ENCODE measurements at regions of chr6 and their contacts with region 1.

Region 1: DNA sequence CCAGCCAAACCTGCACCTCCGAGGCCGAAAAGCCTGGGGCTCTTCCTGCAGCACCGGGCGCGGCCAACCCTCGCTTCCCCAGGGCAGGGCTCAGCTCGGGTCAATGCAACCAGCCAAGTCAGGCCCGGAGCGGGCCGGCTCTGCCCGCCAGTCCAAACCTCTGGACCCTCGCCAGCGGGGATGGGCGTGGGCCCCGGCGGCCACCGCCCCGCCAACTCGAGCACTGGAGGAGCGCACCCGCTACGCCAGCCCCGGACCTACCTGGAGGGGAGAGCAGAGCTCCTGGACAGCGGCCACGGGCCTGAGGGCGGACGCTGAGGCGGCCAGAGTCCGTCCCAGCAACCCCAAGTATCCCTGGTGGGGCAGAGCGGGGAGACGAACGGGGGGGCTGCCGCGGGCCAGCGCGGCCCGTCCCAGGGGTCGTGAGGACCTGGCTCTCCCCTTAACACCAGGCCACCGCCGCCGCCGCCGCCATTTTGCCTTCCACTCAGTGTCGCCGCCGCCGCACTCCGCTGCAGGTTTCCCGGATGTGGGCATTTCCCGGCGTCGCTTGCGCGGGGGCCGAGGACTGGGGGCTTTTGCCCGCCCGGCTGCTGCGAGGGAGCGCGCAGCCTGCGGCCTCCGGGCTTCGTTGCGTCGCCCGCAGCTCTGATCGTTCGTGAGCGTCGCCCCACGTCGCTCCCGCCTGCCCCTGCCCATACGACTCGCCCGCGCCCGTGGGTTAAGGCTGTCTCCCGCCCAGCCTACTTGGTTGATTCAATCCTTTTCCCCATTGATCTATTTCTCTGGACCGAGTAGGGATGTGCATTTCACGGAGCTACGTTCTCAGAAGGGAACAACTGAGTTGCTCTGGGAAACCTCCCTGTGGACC is at the start of gene LATS1:
- DNase-seq: peak; percentile 95
- H3K4me3 Mint-ChIP-seq: peak within 1 kb of the TSS; percentile 92
- H3K27ac Mint-ChIP-seq: peak within 1 kb of the TSS; percentile 96
- H3K4me1 Mint-ChIP-seq: peaks cover 31% of the 10 kb centered on the region
- H3K27me3 Mint-ChIP-seq: no peaks in the 10 kb centered on the region
- total RNA-seq, gene LATS1: 19.1 to 20.1 TPM

Region 2: DNA sequence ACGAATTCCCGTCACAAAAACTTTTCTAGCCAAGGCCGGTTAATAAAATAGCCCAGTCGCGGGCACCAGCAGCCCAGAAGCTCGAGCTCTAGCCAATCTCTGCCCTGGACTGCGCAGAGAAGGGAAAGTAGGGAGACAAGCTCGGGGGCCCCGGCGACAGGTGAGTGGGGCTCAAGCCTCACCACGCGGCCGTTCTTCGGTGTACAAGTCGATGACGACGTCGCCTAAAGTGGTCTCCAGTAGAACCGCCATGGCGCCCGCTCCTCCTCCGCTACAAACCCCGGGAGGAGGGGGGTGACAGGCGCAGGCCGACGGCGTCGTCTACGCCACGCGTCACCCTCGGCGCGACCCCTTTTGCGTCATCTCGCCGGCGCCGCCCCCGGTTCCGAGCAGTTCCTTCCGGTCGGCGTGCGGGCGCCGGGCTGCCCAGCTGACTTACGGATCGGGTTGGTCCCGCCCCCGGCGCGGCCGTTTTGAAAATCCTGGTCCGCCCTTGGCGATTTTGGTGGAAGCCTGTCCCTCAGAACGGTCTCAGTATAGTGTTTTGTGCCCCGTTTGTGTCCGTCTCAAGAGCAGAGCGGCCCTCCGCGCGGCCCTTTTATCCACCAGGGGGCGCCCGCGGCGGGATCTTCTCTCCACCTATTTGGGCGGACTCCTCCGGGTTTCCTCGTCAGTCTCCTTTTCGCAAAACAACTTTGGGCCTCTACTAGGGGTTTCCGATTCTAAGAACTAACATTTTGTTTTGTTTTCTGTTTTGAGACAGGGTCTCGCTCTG is 171.9 kb before region 1 on chr6 and contains the start of gene PPIL4:
- CTCF ChIA-PET with region 1: interaction called, 3 read pairs
- POLR2A ChIA-PET with region 1: interaction called, 9 read pairs
- intact Hi-C with region 1: loop called (anchors 1 kb)
- DNase-seq: peak; percentile 97
- H3K4me3 Mint-ChIP-seq: peak within 1 kb of the TSS; percentile 97
- H3K27ac Mint-ChIP-seq: peak within 1 kb of the TSS; percentile 97
- H3K4me1 Mint-ChIP-seq: peaks cover 38% of the 10 kb centered on the region
- H3K27me3 Mint-ChIP-seq: peaks cover 4% of the 10 kb centered on the region
- total RNA-seq, gene PPIL4: 21.5 to 23.6 TPM

Region 3: DNA sequence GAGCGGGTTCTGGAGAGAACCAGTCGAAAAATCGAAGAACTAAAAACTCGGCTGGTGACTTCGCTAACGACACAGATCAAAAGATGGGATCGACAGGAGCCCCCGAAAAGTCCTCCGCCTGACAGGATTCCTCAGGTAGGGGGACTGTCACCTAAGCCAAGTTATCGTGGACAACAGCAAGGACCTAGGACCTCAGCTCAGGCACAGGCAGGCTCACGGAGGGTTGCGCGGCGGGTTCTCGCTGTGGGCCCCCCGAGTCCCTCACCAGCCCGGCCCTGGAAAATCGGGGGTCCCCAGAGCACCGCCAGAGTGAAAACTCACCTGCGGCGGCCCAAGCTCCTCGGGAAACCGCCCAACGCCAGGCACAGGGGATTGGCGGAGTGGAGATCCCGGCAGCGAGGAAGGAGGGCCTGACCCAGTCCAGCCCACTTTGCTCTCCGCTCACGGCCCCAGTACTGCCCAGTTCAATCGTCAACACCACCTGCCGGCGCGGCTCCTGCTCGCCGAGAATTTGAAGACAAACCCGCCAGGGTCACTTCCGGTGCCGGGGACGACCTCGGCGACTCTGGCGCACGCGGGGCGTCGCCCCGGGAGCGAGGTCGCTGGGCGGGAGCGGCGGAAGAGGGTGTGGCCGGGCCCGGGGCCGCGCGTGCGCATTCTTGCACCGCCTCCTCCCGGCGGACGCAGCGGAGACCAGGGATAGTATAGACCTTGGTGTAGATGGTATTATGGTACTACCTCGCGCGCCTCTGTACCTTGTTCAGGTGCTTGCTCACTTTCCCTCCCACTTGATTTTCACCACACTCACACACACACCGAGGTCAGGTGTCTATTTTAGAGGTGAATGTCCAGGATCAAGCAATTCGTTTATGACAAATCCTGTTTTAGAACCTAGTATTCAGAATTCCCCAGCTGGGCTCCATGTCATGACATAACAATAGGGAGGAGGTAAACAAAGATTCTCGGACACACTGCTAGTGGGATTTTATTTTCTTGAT is 69.4 kb before region 1 on chr6 and contains the start of gene KATNA1:
- CTCF ChIA-PET with region 1: interaction called, 3 read pairs
- POLR2A ChIA-PET with region 1: no interaction called
- intact Hi-C with region 1: loop called (anchors 2 kb)
- DNase-seq: peak; percentile 94
- H3K4me3 Mint-ChIP-seq: peak within 1 kb of the TSS; percentile 79
- H3K27ac Mint-ChIP-seq: peak within 1 kb of the TSS; percentile 81
- H3K4me1 Mint-ChIP-seq: peaks cover 22% of the 10 kb centered on the region
- H3K27me3 Mint-ChIP-seq: no peaks in the 10 kb centered on the region
- total RNA-seq, gene KATNA1: 22.3 to 22.8 TPM

Region 4: GRCh38 chr6:149686230-149686629 is 31.6 kb before region 1 on chr6:
- CTCF ChIA-PET with region 1: interaction called, 3 read pairs
- POLR2A ChIA-PET with region 1: interaction called, 3 read pairs
- intact Hi-C with region 1: loop called (anchors 2 kb)
- DNase-seq: no peak
- H3K4me3 Mint-ChIP-seq: no peak overlapping the region
- H3K27ac Mint-ChIP-seq: peak overlapping the region; percentile 52
- H3K4me1 Mint-ChIP-seq: peaks cover 19% of the 10 kb centered on the region
- H3K27me3 Mint-ChIP-seq: no peaks in the 10 kb centered on the region

Region 5: DNA sequence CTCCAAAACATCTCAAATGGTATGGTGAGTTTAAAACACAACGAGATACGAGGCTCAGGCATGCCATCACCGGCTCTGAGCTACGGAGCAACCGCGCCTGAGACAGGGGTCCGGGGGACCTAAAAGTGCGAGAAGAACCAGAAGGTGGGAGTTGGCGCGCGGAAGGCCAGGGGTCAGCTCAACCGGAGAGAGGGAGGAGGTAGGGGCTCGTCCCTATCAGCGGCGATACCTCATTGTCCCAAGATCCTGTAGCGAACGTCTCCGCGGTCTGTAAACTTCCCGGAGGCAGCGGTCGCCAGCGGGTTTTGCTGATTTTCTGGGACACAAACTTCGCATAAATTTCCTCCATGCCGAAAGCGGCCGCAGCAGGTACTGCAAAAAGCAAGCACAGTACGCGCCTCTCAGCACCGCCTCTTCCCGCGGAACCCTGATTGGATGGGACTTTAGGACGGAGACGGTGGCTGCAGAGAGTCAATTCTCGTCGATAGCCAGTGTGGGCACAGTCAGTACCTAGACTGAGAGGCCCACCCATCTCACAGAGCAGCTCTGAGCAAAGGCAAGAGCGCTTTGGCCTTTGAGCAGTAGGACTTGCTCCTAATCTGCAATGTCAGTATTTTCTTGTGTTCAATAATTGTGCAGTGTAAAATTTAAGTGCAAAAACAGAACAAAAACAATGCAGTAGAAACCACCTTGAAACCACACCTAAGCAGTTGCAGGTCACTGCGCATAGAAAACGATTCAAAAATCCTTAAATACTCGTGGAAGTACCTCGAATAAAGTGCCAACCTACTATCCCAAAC is 28.5 kb after region 1 on chr6 and contains the start of gene NUP43:
- CTCF ChIA-PET with region 1: interaction called, 5 read pairs
- POLR2A ChIA-PET with region 1: interaction called, 15 read pairs
- intact Hi-C with region 1: loop called (anchors 1 kb)
- DNase-seq: peak; percentile 97
- H3K4me3 Mint-ChIP-seq: peak within 1 kb of the TSS; percentile 98
- H3K27ac Mint-ChIP-seq: peak within 1 kb of the TSS; percentile 85
- H3K4me1 Mint-ChIP-seq: peaks cover 28% of the 10 kb centered on the region
- H3K27me3 Mint-ChIP-seq: no peaks in the 10 kb centered on the region
- total RNA-seq, gene NUP43: 64.3 to 69.8 TPM

Region 6: DNA sequence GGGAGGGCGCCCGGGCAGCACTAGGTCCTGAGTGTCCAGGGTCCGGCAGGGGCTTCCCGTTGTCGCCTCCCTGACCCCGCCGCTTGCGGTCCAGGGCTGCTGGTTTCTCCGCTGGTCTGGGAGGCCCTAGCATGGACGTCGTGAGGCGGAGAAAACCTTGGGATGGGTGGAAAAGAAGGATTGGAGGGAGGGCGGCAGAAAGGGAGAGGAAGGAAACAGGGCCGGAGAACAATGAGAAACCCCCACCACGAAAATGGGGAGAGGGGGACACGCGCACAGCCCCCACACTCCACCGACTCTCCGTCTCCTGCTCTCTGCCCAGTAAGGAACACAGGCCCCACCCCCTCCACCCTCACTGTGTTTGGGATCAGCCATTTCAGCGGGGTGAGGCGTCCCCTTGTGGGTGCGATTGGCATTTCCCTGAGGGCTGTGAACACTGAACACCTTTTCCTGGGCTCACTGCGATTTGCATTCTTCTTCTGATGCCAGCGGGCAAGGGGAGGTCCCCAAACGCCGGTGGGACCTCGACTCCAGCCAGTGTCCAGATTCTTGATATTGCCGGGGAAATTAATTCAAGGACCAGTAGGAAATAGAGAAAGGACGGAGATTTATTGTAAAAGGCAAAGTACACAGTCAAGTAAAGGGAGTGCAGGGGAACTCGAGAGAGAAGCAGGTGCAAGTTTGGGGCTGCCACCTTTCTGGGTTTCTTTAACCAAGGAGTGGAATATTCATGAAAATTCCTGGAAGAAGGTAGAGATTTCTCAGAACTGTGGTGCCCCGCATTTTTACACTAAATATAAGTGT is 208.4 kb after region 1 on chr6:
- CTCF ChIA-PET with region 1: no interaction called
- POLR2A ChIA-PET with region 1: no interaction called
- intact Hi-C with region 1: loop called (anchors 5 kb)
- DNase-seq: peak; percentile 90
- H3K4me3 Mint-ChIP-seq: peak overlapping the region; percentile 51
- H3K27ac Mint-ChIP-seq: no peak overlapping the region
- H3K4me1 Mint-ChIP-seq: peaks cover 26% of the 10 kb centered on the region
- H3K27me3 Mint-ChIP-seq: peaks cover 83% of the 10 kb centered on the region

Measured in activated CD4-positive, alpha-beta memory T cell treated with anti-CD3 and anti-CD28 coated beads for 36 hours (primary cell).